ENCODE measurements at regions of chr7 and their contacts with region 1.

Region 1: DNA sequence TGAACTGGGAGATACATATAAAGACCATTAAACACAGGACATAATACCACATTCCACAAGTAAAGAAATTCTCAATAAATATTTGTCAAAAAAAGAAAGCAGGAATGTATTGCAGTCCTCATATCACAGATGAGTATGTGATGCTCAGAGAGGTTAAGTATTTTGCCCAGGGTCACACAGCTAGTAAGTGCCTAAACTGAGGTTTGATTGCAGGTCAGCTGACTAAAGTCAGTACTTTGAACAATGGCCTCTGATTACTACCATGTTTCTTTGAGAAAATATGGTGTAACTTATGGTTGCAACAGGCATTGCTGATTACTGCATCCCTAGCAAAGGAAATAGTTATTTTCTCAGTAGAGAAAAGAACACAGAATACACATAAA is 267.1 kb downstream of the ELMO1 start:
- DNase-seq: no peak
- H3K4me3 ChIP-seq: no peak overlapping the region
- H3K27ac ChIP-seq: no peak overlapping the region
- H3K27me3 ChIP-seq: no peaks in the 10 kb centered on the region
- CTCF ChIP-seq: no peak

Region 2: GRCh38 chr7:36487756-36488336 is 693.7 kb before region 1 on chr7:
- CTCF ChIA-PET with region 1: interaction called, 23 read pairs
- POLR2A ChIA-PET with region 1: no interaction called
- DNase-seq: peak; percentile 8
- H3K4me3 ChIP-seq: no peak overlapping the region
- H3K27ac ChIP-seq: no peak overlapping the region
- H3K27me3 ChIP-seq: peaks cover 9% of the 10 kb centered on the region
- CTCF ChIP-seq: peak; percentile 83

Region 3: DNA sequence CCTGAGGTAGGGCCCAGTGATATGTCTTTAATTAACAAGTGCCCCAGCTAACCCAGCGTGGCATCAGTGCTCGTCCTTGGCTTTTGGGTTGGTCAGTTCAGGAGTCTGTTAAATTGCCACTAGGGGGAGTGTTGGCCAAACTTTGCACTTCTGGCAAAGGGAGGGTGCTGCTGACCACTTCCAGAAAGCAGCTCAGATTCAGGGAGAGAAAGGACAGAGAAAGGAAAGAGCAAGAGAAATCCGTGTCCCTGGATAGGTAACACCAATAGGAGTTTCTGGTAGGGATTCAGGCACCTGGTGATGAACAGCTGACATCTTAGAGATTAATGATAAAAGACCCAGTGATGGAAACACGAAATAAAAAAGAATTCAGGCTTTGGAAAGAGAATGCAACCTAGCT is 214.2 kb before region 1 on chr7:
- CTCF ChIA-PET with region 1: interaction called, 313 read pairs
- POLR2A ChIA-PET with region 1: no interaction called
- DNase-seq: peak; percentile 21
- H3K4me3 ChIP-seq: no peak overlapping the region
- H3K27ac ChIP-seq: no peak overlapping the region
- H3K27me3 ChIP-seq: peaks cover 2% of the 10 kb centered on the region
- CTCF ChIP-seq: peak; percentile 86

Region 4: GRCh38 chr7:36986429-36987362 is 194.8 kb before region 1 on chr7:
- CTCF ChIA-PET with region 1: interaction called, 247 read pairs
- POLR2A ChIA-PET with region 1: no interaction called
- DNase-seq: peak; percentile 8
- H3K4me3 ChIP-seq: no peak overlapping the region
- H3K27ac ChIP-seq: no peak overlapping the region
- H3K27me3 ChIP-seq: peaks cover 5% of the 10 kb centered on the region
- CTCF ChIP-seq: peak; percentile 96

Region 5: DNA sequence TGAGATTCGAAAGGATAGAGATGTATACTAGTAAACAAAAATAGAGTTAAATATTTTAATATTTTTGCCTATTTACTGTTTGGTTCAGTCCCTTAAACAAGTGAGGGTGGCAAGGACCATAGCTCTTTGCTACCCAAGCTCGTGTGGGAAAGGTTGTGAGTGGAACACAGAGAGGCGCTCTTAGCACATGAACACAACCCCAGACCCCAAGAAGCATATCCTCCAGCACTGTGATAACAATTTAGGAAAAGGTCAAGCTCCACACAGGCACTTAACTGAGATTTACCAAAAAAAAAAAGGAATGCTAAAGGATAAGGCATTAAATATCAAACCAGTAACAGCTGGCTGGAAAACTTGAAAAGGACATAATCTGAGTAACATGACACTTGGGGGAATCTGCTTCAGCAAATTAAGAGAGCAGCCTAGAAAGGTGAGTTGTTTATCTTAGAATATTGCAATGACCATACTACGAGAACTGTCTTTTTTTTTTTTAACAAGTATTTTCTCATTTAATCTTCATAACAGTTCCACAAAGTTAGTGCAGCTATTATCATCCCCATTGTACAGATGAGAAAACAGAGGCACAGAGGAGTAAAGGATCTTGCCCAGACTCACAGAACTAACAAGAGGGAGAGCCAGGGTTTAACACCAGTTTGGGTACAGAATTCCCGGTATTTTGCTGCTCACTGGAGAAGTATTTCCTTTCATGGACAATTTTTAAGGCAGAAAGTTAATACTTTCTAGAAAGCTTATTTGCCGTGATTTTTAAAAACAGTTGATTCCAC is 153.8 kb before region 1 on chr7:
- CTCF ChIA-PET with region 1: interaction called, 34 read pairs
- POLR2A ChIA-PET with region 1: no interaction called
- DNase-seq: no peak
- H3K4me3 ChIP-seq: no peak overlapping the region
- H3K27ac ChIP-seq: no peak overlapping the region
- H3K27me3 ChIP-seq: peaks cover 2% of the 10 kb centered on the region
- CTCF ChIP-seq: no peak

Measured in AG04450 (cell line).